AG04450 (cell line): ENCODE measurements at regions of chr7 and their contacts with region 1.

Region 1: GRCh38 chr7:2800931-2801688 is 43.0 kb downstream of the GNA12 start:
- DNase-seq: no peak
- H3K4me3 ChIP-seq: no peak overlapping the region
- H3K27ac ChIP-seq: peak overlapping the region; percentile 48
- H3K27me3 ChIP-seq: no peaks in the 10 kb centered on the region
- CTCF ChIP-seq: no peak

Region 2: GRCh38 chr7:2855386-2855785 is 54.3 kb after region 1 on chr7:
- CTCF ChIA-PET with region 1: no interaction called
- POLR2A ChIA-PET with region 1: interaction called, 13 read pairs
- DNase-seq: no peak
- H3K4me3 ChIP-seq: no peak overlapping the region
- H3K27ac ChIP-seq: no peak overlapping the region
- H3K27me3 ChIP-seq: no peaks in the 10 kb centered on the region
- CTCF ChIP-seq: no peak

Region 3: DNA sequence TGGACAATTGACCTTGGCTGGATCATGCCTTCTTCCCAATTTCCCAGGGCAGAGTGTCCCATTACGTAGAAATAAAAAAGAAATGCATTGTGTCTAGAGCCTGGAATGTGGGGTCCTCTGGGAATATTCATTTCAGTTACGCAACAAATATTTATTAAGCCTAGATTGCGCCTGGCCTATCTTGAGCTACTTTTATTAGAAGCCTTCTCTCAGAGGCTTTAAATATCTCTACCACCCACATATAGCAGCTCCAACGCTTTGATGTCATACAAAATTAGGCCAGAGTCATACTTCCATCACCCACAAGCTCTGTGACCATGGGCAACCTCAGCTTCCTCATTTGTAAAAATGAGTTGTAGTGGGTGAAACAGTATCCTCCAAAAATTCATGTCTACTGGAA is 267.4 kb after region 1 on chr7:
- CTCF ChIA-PET with region 1: no interaction called
- POLR2A ChIA-PET with region 1: no interaction called
- DNase-seq: no peak
- H3K4me3 ChIP-seq: no peak overlapping the region
- H3K27ac ChIP-seq: no peak overlapping the region
- H3K27me3 ChIP-seq: peaks cover 6% of the 10 kb centered on the region
- CTCF ChIP-seq: no peak